HEK293T (cell line): ENCODE measurements at regions of chrX and their contacts with region 1.

Region 1: GRCh38 chrX:49155900-49156837 is 6.4 kb upstream of the MAGIX start:
- DNase-seq: peak; percentile 79

Region 2: GRCh38 chrX:49137492-49137891 is 18.7 kb before region 1 on chrX:
- CTCF ChIA-PET with region 1: interaction called, 6 read pairs
- POLR2A ChIA-PET with region 1: interaction called, 12 read pairs
- DNase-seq: no peak